HEK293 (cell line): ENCODE measurements at regions of chr19 and their contacts with region 1.

Region 1: GRCh38 chr19:39765091-39766076 is 13.3 kb upstream of the LEUTX start:
- H3K4me3 ChIP-seq: no peak overlapping the region
- H3K27ac ChIP-seq: no peak overlapping the region
- H3K4me1 ChIP-seq: peaks cover 6% of the 10 kb centered on the region
- CTCF ChIP-seq: peak; percentile 31; the same call in 1 of the 2 replicates

Region 2: GRCh38 chr19:39546599-39546998 is 218.8 kb before region 1 on chr19:
- CTCF ChIA-PET with region 1: interaction called, 16 read pairs
- POLR2A ChIA-PET with region 1: no interaction called
- H3K4me3 ChIP-seq: no peak overlapping the region
- H3K27ac ChIP-seq: no peak overlapping the region
- H3K4me1 ChIP-seq: peaks cover 3% of the 10 kb centered on the region; the same call in 1 of the 2 replicates
- CTCF ChIP-seq: no peak

Region 3: GRCh38 chr19:39590265-39590664 is 175.1 kb before region 1 on chr19:
- CTCF ChIA-PET with region 1: no interaction called
- POLR2A ChIA-PET with region 1: no interaction called
- H3K4me3 ChIP-seq: no peak overlapping the region
- H3K27ac ChIP-seq: no peak overlapping the region
- H3K4me1 ChIP-seq: no peaks in the 10 kb centered on the region
- CTCF ChIP-seq: no peak

Region 4: GRCh38 chr19:39754971-39755370 is 10.4 kb before region 1 on chr19:
- CTCF ChIA-PET with region 1: interaction called, 16 read pairs
- POLR2A ChIA-PET with region 1: interaction called, 3 read pairs
- H3K4me3 ChIP-seq: no peak overlapping the region
- H3K27ac ChIP-seq: no peak overlapping the region
- H3K4me1 ChIP-seq: peaks cover 8% of the 10 kb centered on the region
- CTCF ChIP-seq: no peak

Region 5: DNA sequence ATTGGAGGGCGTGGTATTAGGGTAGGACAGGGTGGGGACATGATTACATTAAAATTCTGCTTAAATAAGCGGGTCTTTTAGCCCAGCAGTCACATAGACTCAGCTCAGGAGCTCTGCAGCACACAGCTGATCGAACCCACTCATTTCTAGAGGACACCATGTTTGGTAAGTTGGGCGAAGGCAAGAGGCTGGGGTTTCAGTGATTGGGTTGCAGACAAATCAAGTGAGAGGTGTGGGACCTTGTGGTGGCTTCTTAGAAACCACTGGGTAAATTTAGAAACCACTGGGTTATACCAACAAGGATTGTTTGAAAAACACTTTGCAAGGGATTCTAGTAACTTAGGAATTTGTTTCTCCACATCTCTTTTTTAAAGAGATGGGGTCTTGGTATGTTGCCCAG is 13.4 kb after region 1 on chr19 and contains the start of gene LEUTX:
- CTCF ChIA-PET with region 1: interaction called, 22 read pairs
- POLR2A ChIA-PET with region 1: no interaction called
- H3K4me3 ChIP-seq: no peak within 1 kb of the TSS
- H3K27ac ChIP-seq: no peak within 1 kb of the TSS
- H3K4me1 ChIP-seq: no peaks in the 10 kb centered on the region
- CTCF ChIP-seq: no peak

Region 6: GRCh38 chr19:39805104-39805503 is 39.7 kb after region 1 on chr19:
- CTCF ChIA-PET with region 1: interaction called, 16 read pairs
- POLR2A ChIA-PET with region 1: no interaction called
- H3K4me3 ChIP-seq: no peak overlapping the region
- H3K27ac ChIP-seq: no peak overlapping the region
- H3K4me1 ChIP-seq: 0 out of 2 replicates have a peak, but pooled peaks cover 3% of the 10 kb centered on the region
- CTCF ChIP-seq: no peak

Region 7: GRCh38 chr19:40305403-40305802 is 540.0 kb after region 1 on chr19:
- CTCF ChIA-PET with region 1: no interaction called
- POLR2A ChIA-PET with region 1: no interaction called
- H3K4me3 ChIP-seq: no peak overlapping the region
- H3K27ac ChIP-seq: no peak overlapping the region
- H3K4me1 ChIP-seq: peaks cover 13% of the 10 kb centered on the region
- CTCF ChIP-seq: peak; percentile 87; the same call in 1 of the 2 replicates